H1 (cell line): ENCODE measurements at regions of chr2 and their contacts with region 1.

Region 1: DNA sequence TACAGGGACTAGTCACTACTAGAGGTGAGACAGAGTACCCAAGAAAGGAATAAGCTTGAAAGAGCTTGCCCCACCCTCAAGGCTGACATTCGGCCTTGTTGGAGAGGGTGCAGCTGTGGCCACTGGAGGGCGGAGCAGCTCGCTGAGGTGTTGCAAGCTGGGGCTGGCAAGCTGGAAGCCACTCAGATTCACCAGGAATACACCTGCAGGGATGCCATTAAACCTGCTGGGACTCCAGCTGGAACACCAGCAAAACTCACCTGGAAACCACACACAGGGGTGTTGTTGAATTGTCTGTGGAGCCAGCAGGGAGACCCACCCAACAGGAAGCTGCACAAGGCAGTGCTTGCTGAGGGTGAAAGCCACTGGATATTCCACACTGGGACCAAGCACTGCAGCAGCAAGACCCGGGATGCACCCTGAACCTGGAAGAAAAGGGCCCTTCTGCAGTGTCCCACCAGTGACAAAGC is 26.1 kb downstream of the KCTD18 start:
- DNase-seq: peak; percentile 57 to 79
- H3K4me3 ChIP-seq: no peak overlapping the region
- H3K27ac ChIP-seq: no peak overlapping the region
- H3K4me1 ChIP-seq: peaks cover 0 to 6% (median 2%) of the 10 kb centered on the region in 4 experiments; a peak in 3 of 7 replicates
- H3K27me3 ChIP-seq: no peaks in the 10 kb centered on the region
- CTCF ChIP-seq: peak; percentile 89 to 96 (median 90)
- EP300 ChIP-seq: no peak
- POLR2A ChIP-seq: no peak
- RAD21 ChIP-seq: peak; percentile 76 to 83

Region 2: DNA sequence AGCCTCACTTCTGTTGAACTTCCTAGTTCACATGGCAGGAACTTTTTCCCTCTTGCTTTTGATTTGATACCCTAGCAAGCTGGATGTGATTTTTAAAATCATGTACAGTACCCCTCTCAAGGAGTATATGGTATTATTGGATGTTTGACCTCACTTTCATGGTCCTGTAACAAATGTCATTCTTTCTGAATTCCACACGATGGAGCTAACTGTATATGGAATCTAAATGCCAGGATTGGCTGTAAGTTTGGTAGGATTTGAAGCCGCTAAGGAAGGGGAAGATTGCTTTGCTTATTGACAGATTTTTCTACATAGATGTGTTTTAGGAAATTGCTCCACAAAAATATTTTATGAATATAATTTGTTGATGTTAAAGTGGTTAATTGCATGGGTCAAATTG is 510.1 kb before region 1 on chr2:
- CTCF ChIA-PET with region 1: interaction called, 46 read pairs
- POLR2A ChIA-PET with region 1: interaction called, 4 read pairs
- DNase-seq: no peak
- H3K4me3 ChIP-seq: no peak overlapping the region
- H3K27ac ChIP-seq: no peak overlapping the region
- H3K4me1 ChIP-seq: no peaks in the 10 kb centered on the region
- H3K27me3 ChIP-seq: no peaks in the 10 kb centered on the region
- CTCF ChIP-seq: peak in 2 of 3 experiments; percentile 49 to 66; a peak in 2 of 4 replicates
- EP300 ChIP-seq: no peak
- POLR2A ChIP-seq: no peak
- RAD21 ChIP-seq: peak; percentile 94

Region 3: DNA sequence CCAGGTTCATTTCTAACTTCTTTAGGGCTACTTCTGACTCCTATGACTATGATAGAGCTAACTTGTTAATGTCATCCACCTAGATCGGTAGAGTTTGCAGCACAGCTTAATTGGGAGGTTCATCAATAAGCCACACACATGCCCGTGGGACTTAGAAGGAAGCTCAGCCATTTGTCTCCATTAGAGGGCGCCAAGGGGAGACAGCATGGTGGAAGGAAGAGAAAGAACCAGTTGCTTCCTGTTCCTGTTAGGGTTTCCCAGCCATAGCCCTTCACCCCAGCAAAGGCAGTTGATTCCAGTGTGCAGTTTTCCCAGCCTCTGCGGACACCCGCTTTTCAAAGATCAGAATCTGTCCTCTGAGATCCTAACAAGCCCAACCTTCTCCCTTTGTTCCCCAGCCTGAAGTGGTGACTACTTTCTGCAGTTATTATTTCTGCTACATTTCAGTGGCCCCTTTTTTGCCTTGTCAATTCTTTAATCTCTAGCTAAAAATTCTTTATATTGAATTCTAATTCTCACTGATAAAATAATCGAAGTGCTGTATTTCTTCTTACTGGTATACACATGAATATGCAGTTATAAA is 498.0 kb before region 1 on chr2:
- CTCF ChIA-PET with region 1: interaction called, 20 read pairs
- POLR2A ChIA-PET with region 1: interaction called, 3 read pairs
- DNase-seq: peak; percentile 25 to 75
- H3K4me3 ChIP-seq: no peak overlapping the region
- H3K27ac ChIP-seq: no peak overlapping the region
- H3K4me1 ChIP-seq: peaks cover 0 to 16% (median 10%) of the 10 kb centered on the region in 4 experiments; a peak in 5 of 7 replicates
- H3K27me3 ChIP-seq: no peaks in the 10 kb centered on the region
- CTCF ChIP-seq: peak; percentile 65 to 96 (median 70)
- EP300 ChIP-seq: no peak
- POLR2A ChIP-seq: no peak
- RAD21 ChIP-seq: peak; percentile 79 to 83

Region 4: DNA sequence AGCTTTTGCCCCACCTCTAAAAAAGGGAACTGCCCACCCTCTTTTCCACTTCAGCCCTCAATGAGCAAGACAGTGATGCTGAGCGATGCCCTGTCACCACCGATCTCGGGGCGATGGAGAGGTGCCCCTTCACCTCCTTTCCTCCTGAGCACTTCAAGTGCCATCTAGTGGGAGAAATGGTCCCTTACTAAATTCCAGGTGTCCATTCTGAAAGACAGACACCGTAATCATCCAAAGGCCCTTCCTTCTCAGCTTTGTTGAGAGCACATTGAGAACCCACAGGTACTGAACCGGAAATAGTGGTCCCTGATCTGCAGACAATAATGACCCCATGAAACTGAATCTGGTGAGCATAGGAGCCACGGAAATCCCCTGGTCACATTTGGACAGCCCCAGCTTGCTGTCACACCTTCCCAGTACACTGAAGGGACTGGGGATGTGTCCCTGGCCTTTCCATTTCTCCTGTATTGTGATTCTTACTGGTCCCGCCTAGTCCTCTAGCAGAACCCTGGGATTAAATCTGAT is 12.4 kb before region 1 on chr2:
- CTCF ChIA-PET with region 1: interaction called, 35 read pairs
- POLR2A ChIA-PET with region 1: interaction called, 6 read pairs
- DNase-seq: no peak
- H3K4me3 ChIP-seq: no peak overlapping the region
- H3K27ac ChIP-seq: no peak overlapping the region
- H3K4me1 ChIP-seq: peaks cover 0 to 3% (median under 1%) of the 10 kb centered on the region in 4 experiments; a peak in 2 of 7 replicates
- H3K27me3 ChIP-seq: no peaks in the 10 kb centered on the region
- CTCF ChIP-seq: peak; percentile 28 to 60 (median 59)
- EP300 ChIP-seq: no peak
- POLR2A ChIP-seq: no peak
- RAD21 ChIP-seq: peak; percentile 72 to 77

Region 5: GRCh38 chr2:200509612-200510433 is 26.1 kb after region 1 on chr2 and contains the start of gene KCTD18:
- CTCF ChIA-PET with region 1: interaction called, 49 read pairs
- POLR2A ChIA-PET with region 1: interaction called, 8 read pairs
- DNase-seq: peak; percentile 56 to 92
- H3K4me3 ChIP-seq: peak within 1 kb of the TSS; percentile 56 to 84 (median 73)
- H3K27ac ChIP-seq: no peak within 1 kb of the TSS
- H3K4me1 ChIP-seq: peaks cover 0 to 3% (median under 1%) of the 10 kb centered on the region in 4 experiments; a peak in 2 of 7 replicates
- H3K27me3 ChIP-seq: no peaks in the 10 kb centered on the region; a peak in 1 of 7 replicates
- CTCF ChIP-seq: peak; percentile 74 to 83 (median 75)
- EP300 ChIP-seq: peak in 1 of 2 experiments; percentile 19; a peak in 2 of 3 replicates
- POLR2A ChIP-seq: peak; percentile 33 to 63
- RAD21 ChIP-seq: peak; percentile 50 to 64; a peak in 3 of 4 replicates
- total RNA-seq, gene KCTD18: 3.1 and 3.3 TPM in 2 replicates

Region 6: DNA sequence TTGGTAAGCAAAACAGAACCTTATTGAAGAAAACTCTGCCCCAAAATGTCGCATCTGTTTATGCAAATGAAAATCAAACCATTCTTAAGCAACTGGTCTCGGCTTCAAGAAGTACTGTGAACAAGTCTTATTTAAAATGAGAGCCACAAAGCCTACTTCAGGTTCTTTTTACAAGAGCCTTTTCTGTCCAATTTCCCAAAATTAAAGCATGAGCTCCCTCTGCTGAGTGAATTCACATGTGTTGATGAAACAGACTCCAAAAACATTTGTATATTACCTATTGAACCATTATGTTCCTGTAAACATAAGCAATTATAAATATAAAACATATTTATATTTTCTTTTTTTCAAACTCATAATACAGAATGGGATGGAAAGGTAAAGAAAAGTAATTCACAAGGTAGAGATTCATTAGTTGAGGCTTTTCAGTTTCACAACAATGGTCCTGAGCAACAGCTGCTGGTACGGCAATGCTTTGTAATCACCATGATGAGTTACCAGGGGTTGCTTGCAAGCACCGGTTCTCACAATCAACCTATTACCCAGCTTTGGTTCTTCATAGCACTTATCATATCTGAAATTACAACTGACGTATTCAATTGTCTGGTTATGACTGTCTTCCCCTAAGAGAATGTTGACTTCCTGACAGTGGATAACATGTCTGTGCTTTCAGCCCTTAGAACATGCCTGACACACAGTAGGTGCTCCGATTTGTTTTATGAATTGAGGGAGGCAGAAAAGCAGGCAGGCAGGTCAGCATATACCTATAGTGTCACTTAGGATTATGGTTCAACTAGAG is 219.6 kb after region 1 on chr2:
- CTCF ChIA-PET with region 1: interaction called, 43 read pairs
- POLR2A ChIA-PET with region 1: no interaction called
- DNase-seq: no peak
- H3K4me3 ChIP-seq: no peak overlapping the region
- H3K27ac ChIP-seq: no peak overlapping the region
- H3K4me1 ChIP-seq: peaks cover 0 to 6% (median 2%) of the 10 kb centered on the region in 4 experiments; a peak in 2 of 7 replicates
- H3K27me3 ChIP-seq: no peaks in the 10 kb centered on the region
- CTCF ChIP-seq: peak in 1 of 3 experiments; percentile 50; a peak in 1 of 4 replicates
- EP300 ChIP-seq: no peak
- POLR2A ChIP-seq: no peak
- RAD21 ChIP-seq: peak; percentile 73 to 81